CD4-positive, alpha-beta memory T cell (primary cell): ENCODE measurements at regions of chr16 and their contacts with region 1.

Region 1: GRCh38 chr16:67521095-67521804 is 7.4 kb upstream of the RIPOR1 start:
- DNase-seq: peak; percentile 93 to 98 (median 94)
- H3K4me3 ChIP-seq: peak overlapping the region; percentile 72 to 98
- H3K4me3 Mint-ChIP-seq: peak overlapping the region; percentile 89 to 95 (median 91)
- H3K27ac ChIP-seq: peak overlapping the region; percentile 92
- H3K27ac Mint-ChIP-seq: peak overlapping the region; percentile 98 to 100 (median 99)
- H3K4me1 ChIP-seq: peaks cover 5% of the 10 kb centered on the region
- H3K4me1 Mint-ChIP-seq: peaks cover 9 to 26% (median 12%) of the 10 kb centered on the region in 4 donors
- H3K27me3 ChIP-seq: no peaks in the 10 kb centered on the region
- H3K27me3 Mint-ChIP-seq: no peaks in the 10 kb centered on the region

Region 2: GRCh38 chr16:67480833-67481560 is 40.3 kb before region 1 on chr16 and contains the start of gene ATP6V0D1:
- CTCF ChIA-PET with region 1: interaction called, 712 read pairs
- POLR2A ChIA-PET with region 1: interaction called, 13 read pairs
- intact Hi-C with region 1: no loop called
- DNase-seq: peak; percentile 97 to 99 (median 98)
- H3K4me3 ChIP-seq: peak within 1 kb of the TSS; percentile 97 to 99
- H3K4me3 Mint-ChIP-seq: peak within 1 kb of the TSS; percentile 94 to 100 (median 99)
- H3K27ac ChIP-seq: peak within 1 kb of the TSS; percentile 99
- H3K27ac Mint-ChIP-seq: peak within 1 kb of the TSS; percentile 97 to 100 (median 98)
- H3K4me1 ChIP-seq: peaks cover 43% of the 10 kb centered on the region
- H3K4me1 Mint-ChIP-seq: peaks cover 25 to 65% (median 44%) of the 10 kb centered on the region in 4 donors
- H3K27me3 ChIP-seq: no peaks in the 10 kb centered on the region
- H3K27me3 Mint-ChIP-seq: no peaks in the 10 kb centered on the region
- total RNA-seq, gene ATP6V0D1: 42.8 to 49.0 TPM

Region 3: GRCh38 chr16:67546761-67547422 is 25.6 kb after region 1 on chr16:
- CTCF ChIA-PET with region 1: interaction called, 101 read pairs
- POLR2A ChIA-PET with region 1: interaction called, 30 read pairs
- intact Hi-C with region 1: loop called (anchors 2 kb)
- DNase-seq: peak; percentile 66 to 73 (median 69)
- H3K4me3 ChIP-seq: peak overlapping the region; percentile 41 to 48
- H3K4me3 Mint-ChIP-seq: peak overlapping the region; percentile 58 to 91 (median 82)
- H3K27ac ChIP-seq: peak overlapping the region; percentile 42
- H3K27ac Mint-ChIP-seq: peak overlapping the region; percentile 60 to 96 (median 95)
- H3K4me1 ChIP-seq: peaks cover 43% of the 10 kb centered on the region
- H3K4me1 Mint-ChIP-seq: peaks cover 29 to 65% (median 38%) of the 10 kb centered on the region in 4 donors
- H3K27me3 ChIP-seq: no peaks in the 10 kb centered on the region
- H3K27me3 Mint-ChIP-seq: no peaks in the 10 kb centered on the region

Region 4: DNA sequence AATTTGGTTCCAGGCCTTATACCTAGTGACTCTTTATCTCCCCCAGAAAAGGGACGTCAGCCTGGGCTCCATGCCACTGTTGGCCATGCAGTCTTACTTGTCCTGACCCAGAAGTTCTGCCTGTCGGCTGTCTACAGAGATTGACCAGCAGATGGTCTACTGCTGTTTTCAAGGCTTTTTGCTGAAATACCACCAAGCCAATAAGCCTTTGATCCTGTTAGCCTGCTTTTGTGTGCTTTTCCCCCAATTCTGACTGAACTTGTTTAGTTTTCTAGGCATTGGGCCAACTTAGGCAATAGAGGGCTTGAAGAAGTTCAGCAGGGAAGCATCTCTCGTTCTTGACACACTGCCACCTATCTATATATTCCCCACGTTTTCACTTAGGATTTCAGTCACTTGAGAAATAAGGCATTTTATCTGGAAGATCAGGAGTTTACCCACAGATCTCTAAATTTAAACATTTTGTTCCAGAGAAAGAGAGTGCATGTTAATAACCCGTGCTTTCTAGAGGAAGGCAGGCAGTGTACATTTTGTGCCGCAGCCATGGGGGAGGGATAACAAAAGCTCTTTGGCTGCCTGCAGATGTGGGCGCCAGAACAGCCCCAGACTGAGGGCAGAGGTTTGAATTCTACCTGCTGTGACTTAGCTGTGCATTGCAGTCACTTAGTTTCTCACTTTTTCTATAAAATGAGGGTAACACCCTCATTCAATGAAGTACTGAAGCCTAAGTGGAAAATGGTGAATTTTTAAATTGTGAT is 111.3 kb after region 1 on chr16:
- CTCF ChIA-PET with region 1: interaction called, 14 read pairs
- POLR2A ChIA-PET with region 1: no interaction called
- intact Hi-C with region 1: no loop called
- DNase-seq: no peak
- H3K4me3 ChIP-seq: no peak overlapping the region
- H3K4me3 Mint-ChIP-seq: no peak overlapping the region
- H3K27ac ChIP-seq: no peak overlapping the region
- H3K27ac Mint-ChIP-seq: peak overlapping the region in 2 of 7 donors; percentile 80 to 86
- H3K4me1 ChIP-seq: no peaks in the 10 kb centered on the region
- H3K4me1 Mint-ChIP-seq: peaks cover 0 to 5% (median 0%) of the 10 kb centered on the region in 4 donors
- H3K27me3 ChIP-seq: no peaks in the 10 kb centered on the region
- H3K27me3 Mint-ChIP-seq: no peaks in the 10 kb centered on the region

Region 5: GRCh38 chr16:67667817-67668494 is 146.7 kb after region 1 on chr16:
- CTCF ChIA-PET with region 1: interaction called, 143 read pairs
- POLR2A ChIA-PET with region 1: interaction called, 11 read pairs
- intact Hi-C with region 1: loop called (anchors 1 kb)
- DNase-seq: peak; percentile 78 to 90 (median 82)
- H3K4me3 ChIP-seq: peak overlapping the region in 1 of 2 donors; percentile 89
- H3K4me3 Mint-ChIP-seq: peak overlapping the region; percentile 40 to 92 (median 63)
- H3K27ac ChIP-seq: peak overlapping the region; percentile 64
- H3K27ac Mint-ChIP-seq: peak overlapping the region in 6 of 7 donors; percentile 41 to 75 (median 62)
- H3K4me1 ChIP-seq: peaks cover 24% of the 10 kb centered on the region
- H3K4me1 Mint-ChIP-seq: peaks cover 8 to 49% (median 15%) of the 10 kb centered on the region in 4 donors
- H3K27me3 ChIP-seq: no peaks in the 10 kb centered on the region
- H3K27me3 Mint-ChIP-seq: no peaks in the 10 kb centered on the region

Region 6: DNA sequence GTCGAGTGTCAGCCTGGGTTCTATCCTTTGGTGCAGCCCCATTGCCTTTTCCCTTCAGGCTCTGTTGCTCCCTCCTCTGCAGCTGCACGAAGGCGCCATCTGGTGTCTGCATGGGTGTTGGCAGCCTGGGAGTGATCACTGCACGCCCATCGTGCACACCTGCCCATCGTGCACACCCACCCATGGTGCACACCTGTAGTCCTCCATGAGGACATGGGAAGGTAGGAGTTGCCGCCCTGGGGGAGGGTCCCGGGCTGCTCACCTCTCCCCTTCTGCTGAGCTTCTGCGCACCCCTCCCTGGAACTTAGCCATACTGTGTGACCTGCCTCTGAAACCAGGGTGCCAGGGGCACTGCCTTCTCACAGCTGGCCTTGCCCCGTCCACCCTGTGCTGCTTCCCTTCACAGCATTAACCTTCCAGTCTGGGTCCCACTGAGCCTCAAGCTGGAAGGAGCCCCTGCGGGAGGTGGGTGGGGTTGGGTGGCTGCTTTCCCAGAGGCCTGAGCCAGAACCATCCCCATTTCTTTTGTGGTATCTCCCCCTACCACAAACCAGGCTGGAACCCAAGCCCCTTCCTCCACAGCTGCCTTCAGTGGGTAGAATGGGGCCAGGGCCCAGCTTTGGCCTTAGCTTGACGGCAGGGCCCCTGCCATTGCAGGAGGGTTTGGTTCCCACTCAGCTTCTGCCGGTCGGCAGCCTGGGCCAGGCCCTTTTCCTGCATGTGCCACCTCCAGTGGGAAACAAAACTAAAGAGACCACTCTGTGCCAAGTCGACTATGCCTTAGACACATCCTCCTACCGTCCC is 407.5 kb after region 1 on chr16:
- CTCF ChIA-PET with region 1: interaction called, 30 read pairs
- POLR2A ChIA-PET with region 1: interaction called, 3 read pairs
- intact Hi-C with region 1: loop called (anchors 2 kb)
- DNase-seq: peak; percentile 70 to 75 (median 72)
- H3K4me3 ChIP-seq: no peak overlapping the region
- H3K4me3 Mint-ChIP-seq: no peak overlapping the region
- H3K27ac ChIP-seq: no peak overlapping the region
- H3K27ac Mint-ChIP-seq: peak overlapping the region; percentile 22 to 74 (median 69)
- H3K4me1 ChIP-seq: peaks cover 7% of the 10 kb centered on the region
- H3K4me1 Mint-ChIP-seq: peaks cover 3 to 16% (median 8%) of the 10 kb centered on the region in 4 donors
- H3K27me3 ChIP-seq: no peaks in the 10 kb centered on the region
- H3K27me3 Mint-ChIP-seq: no peaks in the 10 kb centered on the region